Caco-2 (cell line): ENCODE measurements at regions of chr2 and their contacts with region 1.

Region 1: GRCh38 chr2:109715313-109715805 is 78.7 kb upstream of the RGPD5 start:
- DNase-seq: peak; percentile 68 to 71
- H3K4me3 ChIP-seq: no peak overlapping the region
- H3K4me3 Mint-ChIP-seq: no peak overlapping the region
- H3K27ac Mint-ChIP-seq: no peak overlapping the region
- H3K4me1 ChIP-seq: peaks cover 25% of the 10 kb centered on the region
- H3K4me1 Mint-ChIP-seq: peaks cover 19% of the 10 kb centered on the region
- H3K27me3 ChIP-seq: no peaks in the 10 kb centered on the region
- H3K27me3 Mint-ChIP-seq: no peaks in the 10 kb centered on the region
- CTCF ChIP-seq: peak; percentile 72 to 82

Region 2: GRCh38 chr2:109516445-109517117 is 198.8 kb before region 1 on chr2:
- CTCF ChIA-PET with region 1: no interaction called
- POLR2A ChIA-PET with region 1: no interaction called
- intact Hi-C with region 1: loop called (anchors 1 kb)
- DNase-seq: peak; percentile 75 to 82
- H3K4me3 ChIP-seq: no peak overlapping the region
- H3K4me3 Mint-ChIP-seq: no peak overlapping the region
- H3K27ac Mint-ChIP-seq: no peak overlapping the region
- H3K4me1 ChIP-seq: peaks cover 3% of the 10 kb centered on the region; the same call in 1 of the 2 replicates
- H3K4me1 Mint-ChIP-seq: no peaks in the 10 kb centered on the region
- H3K27me3 ChIP-seq: no peaks in the 10 kb centered on the region
- H3K27me3 Mint-ChIP-seq: no peaks in the 10 kb centered on the region
- CTCF ChIP-seq: peak; percentile 75 to 94

Region 3: GRCh38 chr2:109613922-109614714 is 101.2 kb before region 1 on chr2 and contains the starts of genes SEPTIN10 and SOWAHC:
- CTCF ChIA-PET with region 1: interaction called, 7 read pairs
- POLR2A ChIA-PET with region 1: interaction called, 8 read pairs
- intact Hi-C with region 1: loop called (anchors 1 kb)
- DNase-seq: peak; percentile 99 to 100
- H3K4me3 ChIP-seq: peak within 1 kb of the TSS; percentile 73
- H3K4me3 Mint-ChIP-seq: peak within 1 kb of the TSS; percentile 95
- H3K27ac Mint-ChIP-seq: peak within 1 kb of the TSS; percentile 95
- H3K4me1 ChIP-seq: peaks cover 32% of the 10 kb centered on the region
- H3K4me1 Mint-ChIP-seq: peaks cover 24% of the 10 kb centered on the region
- H3K27me3 ChIP-seq: no peaks in the 10 kb centered on the region
- H3K27me3 Mint-ChIP-seq: no peaks in the 10 kb centered on the region
- CTCF ChIP-seq: no peak
- total RNA-seq, gene SEPTIN10: 77.3 and 83.7 TPM in 2 replicates
- total RNA-seq, gene SOWAHC: 20.3 and 21.4 TPM in 2 replicates

Region 4: GRCh38 chr2:109676346-109676902 is 38.9 kb before region 1 on chr2:
- CTCF ChIA-PET with region 1: interaction called, 10 read pairs
- POLR2A ChIA-PET with region 1: no interaction called
- intact Hi-C with region 1: no loop called
- DNase-seq: no peak
- H3K4me3 ChIP-seq: no peak overlapping the region
- H3K4me3 Mint-ChIP-seq: no peak overlapping the region
- H3K27ac Mint-ChIP-seq: peak overlapping the region; percentile 14
- H3K4me1 ChIP-seq: peaks cover 53% of the 10 kb centered on the region
- H3K4me1 Mint-ChIP-seq: peaks cover 56% of the 10 kb centered on the region
- H3K27me3 ChIP-seq: no peaks in the 10 kb centered on the region
- H3K27me3 Mint-ChIP-seq: no peaks in the 10 kb centered on the region
- CTCF ChIP-seq: no peak

Region 5: GRCh38 chr2:109699646-109700045 is 15.7 kb before region 1 on chr2:
- CTCF ChIA-PET with region 1: interaction called, 5 read pairs
- POLR2A ChIA-PET with region 1: no interaction called
- intact Hi-C with region 1: loop called (anchors 2 kb)
- DNase-seq: peak in 1 of 2 experiments; percentile 60
- H3K4me3 ChIP-seq: peak overlapping the region; percentile 19
- H3K4me3 Mint-ChIP-seq: peak overlapping the region; percentile 54
- H3K27ac Mint-ChIP-seq: peak overlapping the region; percentile 60
- H3K4me1 ChIP-seq: peaks cover 56% of the 10 kb centered on the region
- H3K4me1 Mint-ChIP-seq: peaks cover 49% of the 10 kb centered on the region
- H3K27me3 ChIP-seq: no peaks in the 10 kb centered on the region
- H3K27me3 Mint-ChIP-seq: no peaks in the 10 kb centered on the region
- CTCF ChIP-seq: no peak